CD8-positive, alpha-beta memory T cell (primary cell): ENCODE measurements at regions of chr17 and their contacts with region 1.

Region 1: DNA sequence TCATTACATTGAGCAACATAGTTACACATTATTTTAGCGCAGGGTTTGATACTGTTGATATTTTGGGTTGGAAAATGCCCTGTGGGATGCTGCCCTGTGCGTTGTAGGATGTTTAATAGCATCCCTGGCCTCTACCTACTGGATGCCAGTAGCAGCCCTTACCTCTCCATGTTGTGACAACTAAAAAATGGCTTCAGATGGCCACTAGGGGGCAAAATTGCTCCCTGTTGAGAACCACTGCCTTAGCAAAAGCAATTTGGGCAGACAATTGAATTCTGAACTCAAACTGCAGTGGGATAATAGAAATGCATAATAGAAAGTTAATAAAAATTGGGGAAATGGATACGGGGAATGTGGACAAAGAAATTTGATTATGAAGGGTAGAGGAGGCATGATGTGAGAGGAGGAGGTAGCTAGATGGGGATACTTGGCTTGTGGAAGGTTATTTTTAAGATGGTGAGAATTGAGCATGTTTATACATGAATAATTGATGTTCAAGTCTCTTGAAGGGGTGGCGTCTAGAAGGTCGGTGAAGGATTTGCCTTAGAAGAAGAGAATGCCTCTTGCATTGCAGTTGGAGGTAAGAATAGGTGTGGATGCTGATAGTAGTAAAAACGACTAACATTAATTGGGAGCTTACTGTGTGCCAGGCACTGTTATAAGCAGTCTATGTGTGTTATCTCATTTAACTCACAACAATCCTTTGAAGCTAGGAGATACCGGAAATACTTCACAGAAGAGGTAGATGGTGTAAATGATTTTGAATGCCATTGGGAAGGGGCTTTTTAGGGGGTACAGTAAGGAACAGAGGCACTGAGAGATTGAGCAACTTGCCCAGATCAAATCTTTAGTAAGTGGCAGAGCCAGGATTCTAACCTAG is 19.0 kb downstream of the HEATR9 start:
- DNase-seq: peak; percentile 35 to 79 (median 41)
- H3K4me3 ChIP-seq: no peak overlapping the region
- H3K4me3 Mint-ChIP-seq: peak overlapping the region in 5 of 7 donors; percentile 11 to 57 (median 22)
- H3K27ac ChIP-seq: no peak overlapping the region
- H3K27ac Mint-ChIP-seq: peak overlapping the region; percentile 14 to 82 (median 62)
- H3K4me1 ChIP-seq: peaks cover 6% of the 10 kb centered on the region
- H3K4me1 Mint-ChIP-seq: peaks cover 29 to 33% (median 33%) of the 10 kb centered on the region in 3 donors
- H3K27me3 ChIP-seq: no peaks in the 10 kb centered on the region
- H3K27me3 Mint-ChIP-seq: no peaks in the 10 kb centered on the region

Region 2: DNA sequence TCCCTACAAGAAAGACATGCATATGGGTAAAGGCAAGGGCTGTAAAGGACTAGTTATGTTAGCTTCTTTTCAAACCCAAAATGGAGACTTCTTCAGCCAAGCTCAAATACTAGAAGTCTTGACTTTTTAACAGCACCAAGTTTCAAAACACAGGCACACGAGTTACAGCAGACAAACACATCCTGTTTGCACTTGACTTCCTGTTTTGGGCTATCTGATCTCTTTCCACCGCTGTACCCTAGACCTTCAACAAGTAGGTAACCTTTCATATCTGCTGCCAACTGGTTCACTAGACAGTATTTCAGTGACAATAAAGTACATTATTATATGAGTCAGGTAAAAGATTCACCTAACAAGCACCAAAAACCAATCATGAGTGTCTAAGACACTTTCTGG is 798.5 kb before region 1 on chr17:
- CTCF ChIA-PET with region 1: no interaction called
- POLR2A ChIA-PET with region 1: no interaction called
- DNase-seq: peak in 4 of 5 donors; percentile 6 to 82 (median 68)
- H3K4me3 ChIP-seq: peak overlapping the region; percentile 56
- H3K4me3 Mint-ChIP-seq: peak overlapping the region; percentile 32 to 76 (median 71)
- H3K27ac ChIP-seq: peak overlapping the region; percentile 49
- H3K27ac Mint-ChIP-seq: peak overlapping the region; percentile 89 to 99 (median 94)
- H3K4me1 ChIP-seq: peaks cover 82% of the 10 kb centered on the region
- H3K4me1 Mint-ChIP-seq: peaks cover 67 to 84% (median 80%) of the 10 kb centered on the region in 3 donors
- H3K27me3 ChIP-seq: no peaks in the 10 kb centered on the region
- H3K27me3 Mint-ChIP-seq: peaks cover 0 to 2% of the 10 kb centered on the region in 2 donors

Region 3: GRCh38 chr17:35695613-35696012 is 154.1 kb before region 1 on chr17:
- CTCF ChIA-PET with region 1: no interaction called
- POLR2A ChIA-PET with region 1: no interaction called
- DNase-seq: no peak
- H3K4me3 ChIP-seq: no peak overlapping the region
- H3K4me3 Mint-ChIP-seq: no peak overlapping the region
- H3K27ac ChIP-seq: no peak overlapping the region
- H3K27ac Mint-ChIP-seq: no peak overlapping the region
- H3K4me1 ChIP-seq: no peaks in the 10 kb centered on the region
- H3K4me1 Mint-ChIP-seq: peaks cover 0 to 3% (median 0%) of the 10 kb centered on the region in 3 donors
- H3K27me3 ChIP-seq: no peaks in the 10 kb centered on the region
- H3K27me3 Mint-ChIP-seq: no peaks in the 10 kb centered on the region

Region 4: DNA sequence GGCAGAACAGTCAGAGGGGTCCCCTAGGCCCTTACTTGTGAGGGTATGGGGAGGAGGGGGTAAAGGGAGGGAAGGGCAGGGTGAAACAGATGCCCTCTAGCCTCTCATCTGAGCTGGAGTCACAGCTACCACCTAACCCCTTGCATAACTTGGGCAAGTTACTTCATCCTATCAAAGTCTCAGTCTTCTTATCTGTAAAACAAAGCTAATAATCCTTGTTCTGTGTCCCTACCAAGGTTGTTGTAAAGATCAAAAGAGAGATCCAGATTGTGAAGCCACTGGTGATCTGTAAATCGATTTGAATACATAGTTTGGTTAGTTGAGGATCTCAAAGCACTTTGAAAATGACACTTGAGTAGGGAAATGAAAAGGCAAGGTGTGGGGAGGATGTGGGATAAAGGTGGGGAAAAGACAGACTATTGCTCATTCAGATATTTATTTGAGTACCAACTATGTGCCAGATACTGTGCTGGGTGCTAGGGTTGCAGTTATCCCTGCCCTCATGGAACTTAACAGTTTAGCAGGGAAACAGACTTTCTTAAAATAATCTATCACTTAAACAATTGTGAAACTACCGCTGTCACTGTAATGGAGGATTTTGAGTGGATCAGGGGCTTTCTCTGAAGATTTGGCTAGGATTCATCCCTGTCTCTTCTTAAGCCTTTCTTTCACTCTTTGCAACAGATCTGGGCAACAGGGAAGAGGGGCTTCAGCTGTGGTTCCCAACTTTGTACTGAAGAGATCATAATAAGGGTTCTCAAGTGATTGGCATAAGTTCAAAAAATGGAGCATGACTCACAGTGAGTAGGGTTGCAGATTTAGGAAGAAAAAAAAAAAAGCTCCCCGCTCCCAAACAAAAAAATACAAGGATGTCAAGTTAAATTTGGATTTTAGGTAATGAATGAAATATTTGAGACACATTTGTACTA is 16.0 kb after region 1 on chr17:
- CTCF ChIA-PET with region 1: interaction called, 44 read pairs
- POLR2A ChIA-PET with region 1: interaction called, 7 read pairs
- DNase-seq: no peak
- H3K4me3 ChIP-seq: no peak overlapping the region
- H3K4me3 Mint-ChIP-seq: no peak overlapping the region
- H3K27ac ChIP-seq: no peak overlapping the region
- H3K27ac Mint-ChIP-seq: peak overlapping the region in 7 of 8 donors; percentile 48 to 85 (median 66)
- H3K4me1 ChIP-seq: peaks cover under 1% of the 10 kb centered on the region
- H3K4me1 Mint-ChIP-seq: peaks cover 33 to 56% (median 43%) of the 10 kb centered on the region in 3 donors
- H3K27me3 ChIP-seq: no peaks in the 10 kb centered on the region
- H3K27me3 Mint-ChIP-seq: no peaks in the 10 kb centered on the region

Region 5: GRCh38 chr17:35870906-35871819 is 21.5 kb after region 1 on chr17:
- CTCF ChIA-PET with region 1: interaction called, 44 read pairs
- POLR2A ChIA-PET with region 1: interaction called, 7 read pairs
- DNase-seq: peak in 3 of 5 donors; percentile 34 to 65 (median 41)
- H3K4me3 ChIP-seq: no peak overlapping the region
- H3K4me3 Mint-ChIP-seq: peak overlapping the region in 4 of 7 donors; percentile 7 to 71 (median 40)
- H3K27ac ChIP-seq: no peak overlapping the region
- H3K27ac Mint-ChIP-seq: peak overlapping the region; percentile 42 to 95 (median 76)
- H3K4me1 ChIP-seq: peaks cover 27% of the 10 kb centered on the region
- H3K4me1 Mint-ChIP-seq: peaks cover 59 to 82% (median 66%) of the 10 kb centered on the region in 3 donors
- H3K27me3 ChIP-seq: no peaks in the 10 kb centered on the region
- H3K27me3 Mint-ChIP-seq: no peaks in the 10 kb centered on the region

Region 6: GRCh38 chr17:35947156-35947585 is 97.5 kb after region 1 on chr17:
- CTCF ChIA-PET with region 1: interaction called, 13 read pairs
- POLR2A ChIA-PET with region 1: no interaction called
- DNase-seq: peak; percentile 14 to 68 (median 21)
- H3K4me3 ChIP-seq: no peak overlapping the region
- H3K4me3 Mint-ChIP-seq: peak overlapping the region in 5 of 7 donors; percentile 44 to 72 (median 55)
- H3K27ac ChIP-seq: no peak overlapping the region
- H3K27ac Mint-ChIP-seq: peak overlapping the region in 2 of 8 donors; percentile 22 to 75
- H3K4me1 ChIP-seq: no peaks in the 10 kb centered on the region
- H3K4me1 Mint-ChIP-seq: peaks cover 7 to 26% (median 10%) of the 10 kb centered on the region in 3 donors
- H3K27me3 ChIP-seq: no peaks in the 10 kb centered on the region
- H3K27me3 Mint-ChIP-seq: no peaks in the 10 kb centered on the region

Region 7: GRCh38 chr17:35969558-35970380 is 120.1 kb after region 1 on chr17:
- CTCF ChIA-PET with region 1: interaction called, 12 read pairs
- POLR2A ChIA-PET with region 1: no interaction called
- DNase-seq: peak; percentile 45 to 80 (median 68)
- H3K4me3 ChIP-seq: no peak overlapping the region
- H3K4me3 Mint-ChIP-seq: no peak overlapping the region
- H3K27ac ChIP-seq: no peak overlapping the region
- H3K27ac Mint-ChIP-seq: peak overlapping the region in 2 of 8 donors; percentile 3 to 73
- H3K4me1 ChIP-seq: no peaks in the 10 kb centered on the region
- H3K4me1 Mint-ChIP-seq: peaks cover 7 to 16% (median 8%) of the 10 kb centered on the region in 3 donors
- H3K27me3 ChIP-seq: no peaks in the 10 kb centered on the region
- H3K27me3 Mint-ChIP-seq: no peaks in the 10 kb centered on the region

Region 8: DNA sequence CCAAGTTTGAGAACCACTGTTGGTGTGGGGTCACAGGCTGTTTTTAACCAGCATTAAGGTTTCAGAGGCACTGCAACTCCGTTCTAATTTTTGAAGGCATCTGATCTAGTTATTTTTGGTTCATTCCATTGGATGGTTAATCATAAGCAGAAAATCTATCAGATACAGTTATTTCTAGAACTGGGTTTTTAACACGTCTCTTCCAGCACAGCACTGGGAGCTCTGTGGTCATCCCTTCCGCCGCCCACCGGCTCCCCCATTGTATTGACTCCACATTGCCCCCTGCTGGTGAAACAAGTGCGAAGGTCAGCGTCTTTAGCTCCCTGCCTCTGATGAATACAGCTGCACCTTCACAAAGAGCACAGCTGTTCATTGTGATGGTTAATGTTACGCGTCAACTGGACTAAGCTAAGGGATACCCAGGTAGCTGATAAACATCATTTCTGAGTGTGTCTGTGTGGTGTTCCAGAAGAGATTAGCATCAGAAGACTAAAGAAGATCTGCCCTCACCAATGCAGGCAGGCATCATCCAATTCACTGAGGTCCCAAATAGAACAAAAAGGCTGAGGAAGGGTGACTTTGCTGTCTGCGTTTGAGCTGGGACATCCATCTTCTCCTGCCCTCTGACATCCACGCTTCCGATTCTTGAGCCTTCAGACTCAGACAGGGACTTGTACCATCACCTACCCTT is 222.9 kb after region 1 on chr17:
- CTCF ChIA-PET with region 1: interaction called, 13 read pairs
- POLR2A ChIA-PET with region 1: no interaction called
- DNase-seq: peak; percentile 27 to 77 (median 59)
- H3K4me3 ChIP-seq: no peak overlapping the region
- H3K4me3 Mint-ChIP-seq: peak overlapping the region in 6 of 7 donors; percentile 18 to 63 (median 34)
- H3K27ac ChIP-seq: no peak overlapping the region
- H3K27ac Mint-ChIP-seq: peak overlapping the region in 6 of 8 donors; percentile 0 to 89 (median 48)
- H3K4me1 ChIP-seq: peaks cover 29% of the 10 kb centered on the region
- H3K4me1 Mint-ChIP-seq: peaks cover 38 to 58% (median 55%) of the 10 kb centered on the region in 3 donors
- H3K27me3 ChIP-seq: no peaks in the 10 kb centered on the region
- H3K27me3 Mint-ChIP-seq: no peaks in the 10 kb centered on the region

Region 9: DNA sequence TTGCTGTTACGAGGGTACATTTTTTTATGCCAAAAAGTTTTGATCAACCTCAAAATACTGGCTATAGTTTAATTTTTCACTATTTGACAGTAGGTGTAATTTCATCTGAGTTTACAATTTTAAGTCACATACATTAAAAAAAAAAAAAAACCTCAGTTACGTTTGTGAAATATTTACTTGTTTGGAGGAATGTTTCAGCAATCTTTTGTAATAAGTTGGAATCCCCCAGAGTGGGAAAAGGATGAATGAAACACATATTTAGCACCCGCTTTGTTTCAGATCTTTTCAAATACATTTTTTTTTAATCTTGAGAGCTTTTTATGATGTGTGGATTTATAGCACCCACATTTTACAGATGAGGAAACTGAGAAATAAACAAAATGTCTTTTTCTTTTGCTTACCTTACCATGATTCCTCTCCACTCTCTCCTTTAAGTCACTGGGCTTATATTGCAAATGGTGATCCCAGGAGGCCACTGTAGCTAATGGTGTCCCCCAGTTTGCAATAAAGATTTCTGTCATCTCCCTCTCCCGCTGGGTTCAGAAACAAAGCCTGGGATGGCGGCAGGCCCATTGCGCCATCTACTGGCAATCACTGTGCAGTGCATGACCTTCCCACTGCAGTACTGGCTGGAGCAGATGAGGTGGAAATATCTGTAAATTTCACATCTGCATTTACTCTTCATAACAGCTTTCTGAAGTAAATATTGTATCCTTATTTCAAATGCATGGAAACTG is 299.0 kb after region 1 on chr17:
- CTCF ChIA-PET with region 1: interaction called, 19 read pairs
- POLR2A ChIA-PET with region 1: interaction called, 6 read pairs
- DNase-seq: peak; percentile 49 to 80 (median 67)
- H3K4me3 ChIP-seq: no peak overlapping the region
- H3K4me3 Mint-ChIP-seq: peak overlapping the region in 6 of 7 donors; percentile 22 to 84 (median 67)
- H3K27ac ChIP-seq: no peak overlapping the region
- H3K27ac Mint-ChIP-seq: peak overlapping the region in 5 of 8 donors; percentile 21 to 79 (median 55)
- H3K4me1 ChIP-seq: no peaks in the 10 kb centered on the region
- H3K4me1 Mint-ChIP-seq: peaks cover 4 to 43% (median 39%) of the 10 kb centered on the region in 3 donors
- H3K27me3 ChIP-seq: no peaks in the 10 kb centered on the region
- H3K27me3 Mint-ChIP-seq: peaks cover 5 to 9% of the 10 kb centered on the region in 2 donors